ENCODE measurements at regions of chr12 and their contacts with region 1.

Region 1: DNA sequence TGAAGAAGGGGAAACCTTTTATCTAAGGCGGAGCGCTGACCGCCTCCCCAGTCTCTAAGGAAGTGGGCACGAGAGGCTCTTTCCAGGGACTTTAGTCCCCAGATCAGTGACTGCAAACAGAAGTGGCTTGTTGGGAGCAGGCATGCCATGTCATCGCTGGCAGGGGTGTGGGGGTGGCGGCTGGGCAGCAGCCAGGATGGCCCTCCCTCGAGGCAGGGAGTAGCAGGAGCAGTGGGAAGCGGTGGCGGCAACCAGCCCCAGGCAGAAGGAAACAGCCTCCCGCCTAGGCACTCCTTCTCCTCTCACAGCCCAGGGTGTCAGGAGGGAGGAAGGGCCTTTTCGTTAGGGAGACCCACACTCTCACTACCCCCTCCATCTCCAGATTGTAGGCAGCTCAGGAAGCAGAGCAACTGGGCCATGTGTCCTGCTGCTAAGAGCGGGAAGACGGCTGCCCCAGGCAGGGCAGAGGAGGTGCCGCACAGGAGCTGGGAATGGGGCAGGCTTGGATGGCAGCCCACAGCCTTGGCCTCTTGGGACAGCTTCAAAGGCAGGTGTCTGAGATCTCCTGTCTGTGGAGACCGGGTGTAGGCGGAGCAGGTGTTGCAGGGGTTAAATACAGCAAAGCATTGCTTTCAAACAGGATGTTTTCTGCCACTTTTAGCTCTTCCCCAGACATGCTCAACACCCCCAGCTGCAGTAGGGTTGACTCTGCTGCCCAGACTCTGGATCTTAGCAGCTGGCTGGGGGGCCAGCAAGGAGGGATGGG is 21.8 kb downstream of the VDR start:
- DNase-seq: no peak
- H3K4me3 Mint-ChIP-seq: peak overlapping the region; percentile 87
- H3K27ac Mint-ChIP-seq: peak overlapping the region; percentile 99
- H3K4me1 Mint-ChIP-seq: peaks cover 80% of the 10 kb centered on the region
- H3K27me3 Mint-ChIP-seq: no peaks in the 10 kb centered on the region

Region 2: DNA sequence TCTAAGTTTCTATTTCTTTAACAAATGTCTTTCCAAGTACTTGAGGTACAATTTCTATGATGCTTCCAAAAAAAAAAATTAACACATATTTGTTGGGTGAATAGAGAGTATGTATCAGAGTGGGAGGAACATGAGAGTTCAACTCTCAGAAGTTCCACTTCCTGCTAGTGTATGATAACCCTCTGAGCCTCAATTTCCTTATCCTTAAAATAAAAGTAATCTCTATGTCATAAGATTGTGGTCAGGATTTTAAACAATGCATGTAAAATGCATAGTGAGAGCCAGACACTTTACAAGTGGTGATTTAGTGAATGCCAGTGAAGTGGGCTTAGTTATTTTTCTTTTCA is 532.9 kb before region 1 on chr12:
- intact Hi-C with region 1: loop called (anchors 5 kb)
- DNase-seq: no peak
- H3K4me3 Mint-ChIP-seq: peak overlapping the region; percentile 52
- H3K27ac Mint-ChIP-seq: peak overlapping the region; percentile 98
- H3K4me1 Mint-ChIP-seq: peaks cover 58% of the 10 kb centered on the region
- H3K27me3 Mint-ChIP-seq: no peaks in the 10 kb centered on the region

Region 3: GRCh38 chr12:47860279-47860841 is 22.6 kb before region 1 on chr12:
- intact Hi-C with region 1: loop called (anchors 1 kb)
- DNase-seq: no peak
- H3K4me3 Mint-ChIP-seq: peak overlapping the region; percentile 53
- H3K27ac Mint-ChIP-seq: peak overlapping the region; percentile 99
- H3K4me1 Mint-ChIP-seq: peaks cover 63% of the 10 kb centered on the region
- H3K27me3 Mint-ChIP-seq: no peaks in the 10 kb centered on the region

Region 4: DNA sequence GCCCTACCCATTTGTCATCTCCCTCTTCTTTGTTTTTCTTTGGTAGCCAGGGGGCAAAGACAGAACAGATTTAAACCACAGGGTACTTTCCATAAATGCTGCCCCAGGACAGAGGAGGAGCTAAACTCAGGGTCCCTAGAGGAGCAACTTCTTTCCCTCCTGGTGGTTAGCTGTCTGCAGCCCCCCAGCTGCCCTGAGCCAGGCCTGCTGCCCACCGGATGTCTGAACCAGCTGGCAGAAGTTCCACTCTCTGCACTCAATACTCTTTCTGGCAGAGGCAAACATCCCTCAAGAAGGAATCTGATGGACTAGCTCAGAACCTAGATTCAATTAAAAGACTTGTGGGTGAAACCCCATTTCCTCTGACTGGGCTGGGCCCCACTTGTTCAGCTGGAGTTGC is 11.1 kb after region 1 on chr12:
- intact Hi-C with region 1: loop called (anchors 1 kb)
- DNase-seq: no peak
- H3K4me3 Mint-ChIP-seq: peak overlapping the region; percentile 23
- H3K27ac Mint-ChIP-seq: peak overlapping the region; percentile 85
- H3K4me1 Mint-ChIP-seq: peaks cover 93% of the 10 kb centered on the region
- H3K27me3 Mint-ChIP-seq: no peaks in the 10 kb centered on the region

Region 5: DNA sequence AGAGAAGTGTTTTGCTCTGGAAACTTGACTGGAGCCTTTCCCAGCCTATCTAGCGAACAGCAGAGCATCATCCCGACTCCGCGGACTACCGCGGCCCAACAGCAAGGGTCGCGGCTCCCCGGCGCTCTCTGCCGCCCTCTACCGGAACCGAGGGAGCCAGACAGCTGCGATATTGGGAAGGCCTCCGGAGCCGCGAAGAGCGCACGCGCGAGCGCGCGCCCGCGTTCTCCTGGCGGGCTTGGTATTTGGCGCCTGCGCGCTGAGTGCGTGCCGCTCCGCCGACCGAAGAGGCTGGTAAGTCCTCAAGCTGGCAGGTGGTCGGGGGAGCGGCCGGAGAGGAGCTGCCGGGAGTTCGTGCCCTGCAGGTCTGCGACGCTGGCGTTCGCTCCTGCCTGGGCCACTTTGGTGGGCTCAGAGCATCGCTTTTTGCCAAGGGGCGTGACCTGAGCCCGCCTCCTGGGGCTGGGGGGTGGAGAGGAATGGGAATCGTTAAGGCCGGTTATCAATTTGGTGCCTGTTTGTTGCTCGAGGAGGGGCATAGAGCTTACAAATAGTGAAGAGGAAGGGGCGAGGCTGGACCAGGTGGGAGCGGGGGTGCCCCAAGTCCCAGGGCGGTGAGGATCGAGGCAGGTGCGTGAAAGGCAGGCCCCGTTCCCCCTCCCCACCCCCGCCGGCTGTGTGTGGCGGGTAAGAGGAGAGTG is 80.5 kb after region 1 on chr12 and contains the start of gene TMEM106C:
- intact Hi-C with region 1: loop called (anchors 5 kb)
- DNase-seq: peak; percentile 89
- H3K4me3 Mint-ChIP-seq: peak within 1 kb of the TSS; percentile 95
- H3K27ac Mint-ChIP-seq: peak within 1 kb of the TSS; percentile 81
- H3K4me1 Mint-ChIP-seq: peaks cover 30% of the 10 kb centered on the region
- H3K27me3 Mint-ChIP-seq: peaks cover 27% of the 10 kb centered on the region
- total RNA-seq, gene TMEM106C: 168 and 169 TPM in 2 replicates

Region 6: DNA sequence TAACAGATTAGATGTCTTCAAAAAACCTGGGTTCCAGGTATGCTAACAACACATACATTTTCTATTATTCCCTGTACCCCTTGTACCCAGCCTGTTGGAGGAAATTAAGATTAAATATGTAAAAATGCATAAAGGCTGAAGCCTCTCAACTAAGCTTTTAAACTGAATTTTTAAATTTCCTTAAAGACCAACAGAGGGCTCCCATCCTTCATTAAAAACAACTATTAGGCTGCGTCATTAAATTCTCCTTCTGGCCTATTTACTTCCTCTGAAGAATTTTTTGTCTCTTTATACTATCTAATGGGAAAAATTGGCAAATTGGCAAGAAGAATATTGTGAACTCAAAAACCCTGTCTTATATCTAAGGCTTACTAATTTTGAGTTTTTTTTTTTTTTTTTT is 201.1 kb after region 1 on chr12:
- intact Hi-C with region 1: no loop called
- DNase-seq: no peak
- H3K4me3 Mint-ChIP-seq: no peak overlapping the region
- H3K27ac Mint-ChIP-seq: no peak overlapping the region
- H3K4me1 Mint-ChIP-seq: no peaks in the 10 kb centered on the region
- H3K27me3 Mint-ChIP-seq: no peaks in the 10 kb centered on the region

Region 7: DNA sequence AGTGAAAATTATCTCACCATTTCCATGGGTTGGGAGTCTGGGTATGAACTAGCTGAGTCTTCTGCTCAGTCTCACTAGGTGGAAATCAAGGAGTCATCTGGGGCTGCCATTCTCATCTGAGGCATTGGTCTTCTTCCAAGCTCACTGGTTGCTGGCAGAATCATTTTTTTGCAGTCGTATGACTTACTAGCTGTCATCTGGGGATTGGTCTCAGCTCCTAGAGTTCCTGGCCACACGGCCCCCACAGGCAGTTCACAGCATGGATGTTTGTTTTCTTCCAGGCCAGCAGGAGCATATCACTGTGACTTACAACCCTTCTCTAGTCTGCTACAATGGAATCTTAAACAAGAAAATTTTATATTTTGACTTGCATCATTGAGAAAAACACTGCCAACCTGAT is 338.7 kb after region 1 on chr12:
- intact Hi-C with region 1: no loop called
- DNase-seq: no peak
- H3K4me3 Mint-ChIP-seq: no peak overlapping the region
- H3K27ac Mint-ChIP-seq: no peak overlapping the region
- H3K4me1 Mint-ChIP-seq: no peaks in the 10 kb centered on the region
- H3K27me3 Mint-ChIP-seq: peaks cover 9% of the 10 kb centered on the region